ENCODE measurements at regions of chr5 and their contacts with region 1.

Region 1: DNA sequence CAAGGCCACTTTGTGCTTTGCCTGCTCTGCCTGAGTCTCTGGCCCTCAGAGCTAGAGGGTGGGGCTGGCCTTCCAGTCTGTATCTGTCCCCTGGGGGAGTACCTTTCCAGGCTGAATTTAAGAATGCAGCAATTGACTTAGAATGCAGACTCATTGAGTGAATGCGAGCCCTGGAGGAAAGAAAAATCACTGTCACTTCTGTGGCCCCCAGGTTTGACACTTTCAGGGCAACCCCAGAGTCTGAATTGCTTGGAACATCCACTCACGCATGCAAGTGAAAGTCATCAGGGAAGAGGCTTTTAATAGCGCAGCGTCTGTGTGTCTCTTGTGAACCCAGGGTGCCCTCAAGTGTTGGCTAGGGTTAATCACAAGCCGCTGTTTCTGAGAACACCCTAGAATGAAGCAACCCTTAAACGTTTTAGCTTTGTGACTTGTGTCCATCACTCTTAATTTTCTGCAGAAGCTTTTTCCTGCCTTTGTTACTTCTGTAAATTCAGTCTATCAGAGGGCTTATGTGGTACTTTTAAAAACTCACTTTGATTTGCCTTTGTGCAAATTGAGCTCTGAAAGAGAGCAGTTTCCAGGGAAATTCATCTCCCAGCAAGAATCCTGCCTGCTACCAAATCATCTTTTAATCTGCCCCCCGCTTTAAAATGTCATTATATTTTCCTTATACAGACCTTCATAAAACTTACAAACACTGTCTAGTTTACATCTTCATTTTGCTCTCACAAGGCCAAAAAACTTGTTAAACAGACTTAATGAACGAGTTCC is 146.8 kb upstream of the IQGAP2 start:
- DNase-seq: peak; percentile 31 to 79 (median 50)
- ATAC-seq: peak; percentile 99
- H3K4me3 ChIP-seq: no peak overlapping the region
- H3K27ac ChIP-seq: no peak overlapping the region
- H3K4me1 ChIP-seq: no peaks in the 10 kb centered on the region
- H3K27me3 ChIP-seq: peaks cover 0 to 16% of the 10 kb centered on the region in 2 experiments; a peak in 2 of 5 replicates
- CTCF ChIP-seq: peak; percentile 81 to 94 (median 83)
- EP300 ChIP-seq: no peak
- POLR2A ChIP-seq: no peak
- RAD21 ChIP-seq: peak; percentile 95 to 96

Region 2: GRCh38 chr5:74673011-74673790 is 1583.1 kb before region 1 on chr5:
- CTCF ChIA-PET with region 1: interaction called, 5 read pairs
- POLR2A ChIA-PET with region 1: no interaction called
- in situ Hi-C with region 1: no loop called
- intact Hi-C with region 1: loop called (anchors 10 kb)
- DNase-seq: peak in 1 of 4 experiments; percentile 24
- ATAC-seq: peak; percentile 88
- H3K4me3 ChIP-seq: no peak overlapping the region
- H3K27ac ChIP-seq: no peak overlapping the region
- H3K4me1 ChIP-seq: no peaks in the 10 kb centered on the region; a peak in 1 of 5 replicates
- H3K27me3 ChIP-seq: peaks cover 10 to 22% of the 10 kb centered on the region in 2 experiments; a peak in 4 of 5 replicates
- CTCF ChIP-seq: peak; percentile 33 to 64 (median 43); a peak in 4 of 6 replicates
- EP300 ChIP-seq: no peak
- POLR2A ChIP-seq: no peak
- RAD21 ChIP-seq: peak; percentile 64 to 74

Region 3: DNA sequence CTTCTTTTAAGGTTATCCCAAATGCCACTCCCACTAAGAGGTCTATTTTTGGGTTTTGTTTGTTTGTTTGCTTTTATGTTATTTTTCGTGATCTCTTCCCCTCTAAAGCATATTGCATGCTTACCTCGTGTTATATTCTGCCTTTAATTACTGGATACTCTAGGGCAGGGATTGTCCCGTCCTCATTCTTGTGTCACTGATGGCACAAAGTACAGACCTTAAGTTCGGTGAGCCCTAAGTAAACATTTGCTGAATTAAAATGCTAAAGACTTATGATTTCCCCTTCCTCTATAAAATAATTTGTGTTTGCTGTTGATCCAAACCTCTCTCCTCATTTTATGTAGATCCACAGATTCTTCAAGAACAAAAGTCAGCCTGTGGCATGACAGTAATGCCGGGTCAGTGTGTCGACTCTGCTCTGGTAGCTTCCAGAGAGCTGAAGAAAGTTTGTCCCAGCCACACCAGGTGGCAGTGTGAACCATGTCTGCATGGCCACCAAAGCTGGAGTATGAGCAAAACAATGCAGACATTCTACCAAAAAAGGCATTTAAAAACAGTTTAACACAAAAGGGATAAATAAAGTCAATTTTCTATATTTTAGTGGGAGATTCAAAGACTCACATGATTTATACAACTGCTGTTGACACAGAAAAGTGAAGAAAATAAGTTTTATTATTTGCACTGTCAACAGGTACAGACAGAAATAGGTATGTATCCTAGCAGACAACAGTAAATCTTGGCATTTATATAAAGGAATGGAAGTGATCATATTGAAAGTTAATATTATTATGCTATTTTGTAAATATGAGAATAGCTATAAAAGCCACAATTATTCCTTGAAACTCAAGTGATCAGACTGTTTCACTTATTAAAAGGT is 521.2 kb before region 1 on chr5:
- CTCF ChIA-PET with region 1: interaction called, 10 read pairs
- POLR2A ChIA-PET with region 1: no interaction called
- in situ Hi-C with region 1: no loop called
- intact Hi-C with region 1: loop called (anchors 2 kb)
- DNase-seq: peak in 3 of 4 experiments; percentile 14 to 54 (median 22)
- ATAC-seq: peak; percentile 92
- H3K4me3 ChIP-seq: no peak overlapping the region
- H3K27ac ChIP-seq: no peak overlapping the region
- H3K4me1 ChIP-seq: peaks cover 0 to 4% of the 10 kb centered on the region in 2 experiments; a peak in 1 of 5 replicates
- H3K27me3 ChIP-seq: peaks cover 4 to 7% of the 10 kb centered on the region in 2 experiments; a peak in 1 of 5 replicates
- CTCF ChIP-seq: peak; percentile 63 to 67 (median 63)
- EP300 ChIP-seq: no peak
- POLR2A ChIP-seq: no peak
- RAD21 ChIP-seq: peak; percentile 51 to 66

Region 4: DNA sequence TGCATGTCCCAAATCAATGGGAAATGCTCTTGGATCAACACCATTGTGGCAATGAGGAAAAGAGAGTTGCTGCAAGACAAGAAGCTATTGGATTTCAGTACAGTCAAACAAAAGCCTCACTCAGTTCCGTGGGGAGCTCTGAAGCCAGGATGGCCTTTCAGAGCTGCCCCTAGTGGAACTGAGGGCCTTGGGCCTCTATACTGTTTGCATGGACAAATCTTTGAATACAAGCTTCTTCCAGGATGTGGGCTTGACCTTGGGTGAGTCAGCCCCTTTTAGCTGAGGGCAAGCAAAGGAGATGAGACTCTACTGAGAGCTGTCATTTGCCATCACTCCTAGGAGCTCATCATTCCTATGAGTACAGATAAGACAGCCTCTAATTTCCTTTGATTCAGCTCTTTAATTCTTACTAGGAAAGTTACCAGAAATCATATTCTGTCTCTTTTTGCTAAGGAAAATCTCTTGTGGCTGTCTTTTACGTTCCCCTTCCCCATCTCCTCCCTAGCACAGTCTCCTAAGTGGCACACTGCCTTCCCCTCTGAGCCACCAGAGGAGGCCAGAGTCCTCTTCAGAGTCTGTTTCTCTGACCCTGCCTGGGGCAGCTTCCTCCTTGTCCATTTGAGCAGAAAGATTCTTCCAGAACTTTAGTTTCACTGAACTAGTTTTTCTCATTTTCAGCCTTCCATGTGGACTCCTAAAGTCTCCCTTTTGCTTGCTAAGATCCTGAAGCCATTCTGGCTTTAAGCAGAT is 370.3 kb before region 1 on chr5:
- CTCF ChIA-PET with region 1: no interaction called
- POLR2A ChIA-PET with region 1: no interaction called
- in situ Hi-C with region 1: no loop called
- intact Hi-C with region 1: loop called (anchors 2 kb)
- DNase-seq: peak in 1 of 4 experiments; percentile 1
- ATAC-seq: peak; percentile 77
- H3K4me3 ChIP-seq: no peak overlapping the region
- H3K27ac ChIP-seq: no peak overlapping the region
- H3K4me1 ChIP-seq: no peaks in the 10 kb centered on the region
- H3K27me3 ChIP-seq: no peaks in the 10 kb centered on the region
- CTCF ChIP-seq: peak; percentile 38 to 40 (median 40); a peak in 4 of 6 replicates
- EP300 ChIP-seq: no peak
- POLR2A ChIP-seq: no peak
- RAD21 ChIP-seq: peak; percentile 23 to 57; a peak in 3 of 4 replicates

Region 5: DNA sequence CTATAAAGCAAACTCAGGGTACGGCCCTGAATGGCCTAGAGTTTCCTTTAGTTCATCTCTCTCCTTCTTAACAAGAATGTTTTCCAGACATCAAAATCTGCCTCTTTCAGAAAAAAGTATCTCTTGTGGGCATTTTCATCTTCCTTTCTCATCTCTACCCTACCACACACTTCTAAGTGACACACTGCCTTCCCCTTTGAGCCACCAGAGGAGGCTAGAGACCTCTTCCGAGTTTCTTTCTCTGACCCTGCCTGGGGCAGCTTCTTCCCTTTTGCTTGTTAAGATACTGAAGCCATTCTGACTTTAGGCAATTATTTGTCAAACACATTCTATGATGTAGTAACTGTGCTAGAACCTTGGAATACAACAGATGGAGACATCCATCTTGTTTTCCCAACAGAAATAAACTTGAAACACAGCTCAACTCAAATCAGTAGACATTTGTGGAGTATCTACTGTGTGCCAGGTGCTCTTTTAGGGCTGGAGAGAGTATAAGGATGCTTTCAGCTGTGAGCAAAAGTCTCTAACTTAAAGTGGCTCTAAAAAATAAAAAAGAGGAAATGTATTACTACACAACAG is 181.7 kb before region 1 on chr5:
- CTCF ChIA-PET with region 1: interaction called, 3 read pairs
- POLR2A ChIA-PET with region 1: no interaction called
- in situ Hi-C with region 1: no loop called
- intact Hi-C with region 1: loop called (anchors 5 kb)
- DNase-seq: peak in 2 of 4 experiments; percentile 24 to 29
- ATAC-seq: peak; percentile 73; the same call in 2 of the 3 replicates
- H3K4me3 ChIP-seq: no peak overlapping the region
- H3K27ac ChIP-seq: no peak overlapping the region
- H3K4me1 ChIP-seq: no peaks in the 10 kb centered on the region
- H3K27me3 ChIP-seq: peaks cover 0 to 4% of the 10 kb centered on the region in 2 experiments; a peak in 1 of 5 replicates
- CTCF ChIP-seq: peak; percentile 52 to 67 (median 62)
- EP300 ChIP-seq: no peak
- POLR2A ChIP-seq: no peak
- RAD21 ChIP-seq: peak; percentile 74 to 75

Region 6: DNA sequence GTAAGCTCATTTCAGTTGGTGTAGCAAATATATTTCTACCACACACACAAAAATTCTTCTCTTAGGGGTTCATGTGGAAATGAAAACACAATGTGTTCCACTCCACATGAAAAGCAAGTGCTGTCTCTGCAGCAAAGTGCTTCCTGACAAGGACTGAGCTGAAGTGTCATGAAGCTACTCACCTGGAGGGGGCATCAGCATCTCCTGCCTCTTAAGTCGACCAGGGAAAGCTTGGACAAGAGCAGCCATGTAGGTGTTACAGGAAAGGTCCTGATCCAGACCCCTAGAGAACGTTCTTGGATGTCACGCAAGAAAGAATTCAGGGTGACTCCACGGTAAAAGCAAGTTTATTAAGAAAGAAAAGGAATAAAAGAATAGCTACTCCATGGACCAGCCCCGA is 110.4 kb before region 1 on chr5:
- CTCF ChIA-PET with region 1: interaction called, 7 read pairs
- POLR2A ChIA-PET with region 1: no interaction called
- in situ Hi-C with region 1: no loop called
- intact Hi-C with region 1: loop called (anchors 2 kb)
- DNase-seq: peak; percentile 15 to 54 (median 32)
- ATAC-seq: peak; percentile 93
- H3K4me3 ChIP-seq: no peak overlapping the region
- H3K27ac ChIP-seq: no peak overlapping the region
- H3K4me1 ChIP-seq: no peaks in the 10 kb centered on the region
- H3K27me3 ChIP-seq: no peaks in the 10 kb centered on the region
- CTCF ChIP-seq: peak; percentile 58 to 67 (median 64)
- EP300 ChIP-seq: no peak
- POLR2A ChIP-seq: no peak
- RAD21 ChIP-seq: peak; percentile 47 to 67